Stomach (tissue), 19 donors: ENCODE measurements at regions of chr2 and their contacts with region 1.

Region 1: GRCh38 chr2:46002507-46002883 is 294.7 kb upstream of the EPAS1 start:
- DNase-seq: no peak
- H3K4me3 ChIP-seq: no peak overlapping the region
- H3K27ac ChIP-seq: peak overlapping the region in 4 of 5 donors; percentile 50 to 68 (median 62)
- H3K4me1 ChIP-seq: peaks cover 0 to 27% (median 21%) of the 10 kb centered on the region in 4 donors
- H3K27me3 ChIP-seq: no peaks in the 10 kb centered on the region
- CTCF ChIP-seq: no peak
- EP300 ChIP-seq: no peak
- POLR2A ChIP-seq: no peak

Region 2: GRCh38 chr2:46364797-46365457 is 362.4 kb after region 1 on chr2:
- intact Hi-C with region 1: loop called (anchors 10 kb)
- DNase-seq: peak; percentile 43 to 78
- H3K4me3 ChIP-seq: no peak overlapping the region
- H3K27ac ChIP-seq: no peak overlapping the region
- H3K4me1 ChIP-seq: peaks cover 0 to 13% (median 3%) of the 10 kb centered on the region in 4 donors
- H3K27me3 ChIP-seq: no peaks in the 10 kb centered on the region
- CTCF ChIP-seq: peak in 6 of 7 experiments; percentile 21 to 86 (median 76)
- EP300 ChIP-seq: no peak
- POLR2A ChIP-seq: no peak